IMR-90 (cell line): ENCODE measurements at regions of chr5 and their contacts with region 1.

Region 1: GRCh38 chr5:65910711-65911110 is 15.7 kb upstream of the ERBIN start:
- DNase-seq: no peak
- ATAC-seq: no peak
- H3K4me3 ChIP-seq: no peak overlapping the region
- H3K27ac ChIP-seq: no peak overlapping the region
- H3K4me1 ChIP-seq: no peaks in the 10 kb centered on the region
- H3K27me3 ChIP-seq: no peaks in the 10 kb centered on the region
- CTCF ChIP-seq: no peak
- POLR2A ChIP-seq: no peak
- RAD21 ChIP-seq: no peak

Region 2: GRCh38 chr5:65730910-65731309 is 179.8 kb before region 1 on chr5:
- CTCF ChIA-PET with region 1: interaction called, 10 read pairs
- POLR2A ChIA-PET with region 1: interaction called, 3 read pairs
- dilution Hi-C with region 1: no loop called
- in situ Hi-C with region 1: no loop called
- intact Hi-C with region 1: no loop called
- DNase-seq: peak; percentile 46
- ATAC-seq: peak; percentile 51
- H3K4me3 ChIP-seq: no peak overlapping the region
- H3K27ac ChIP-seq: no peak overlapping the region
- H3K4me1 ChIP-seq: peaks cover 4% of the 10 kb centered on the region
- H3K27me3 ChIP-seq: no peaks in the 10 kb centered on the region
- CTCF ChIP-seq: no peak
- POLR2A ChIP-seq: no peak
- RAD21 ChIP-seq: no peak

Region 3: DNA sequence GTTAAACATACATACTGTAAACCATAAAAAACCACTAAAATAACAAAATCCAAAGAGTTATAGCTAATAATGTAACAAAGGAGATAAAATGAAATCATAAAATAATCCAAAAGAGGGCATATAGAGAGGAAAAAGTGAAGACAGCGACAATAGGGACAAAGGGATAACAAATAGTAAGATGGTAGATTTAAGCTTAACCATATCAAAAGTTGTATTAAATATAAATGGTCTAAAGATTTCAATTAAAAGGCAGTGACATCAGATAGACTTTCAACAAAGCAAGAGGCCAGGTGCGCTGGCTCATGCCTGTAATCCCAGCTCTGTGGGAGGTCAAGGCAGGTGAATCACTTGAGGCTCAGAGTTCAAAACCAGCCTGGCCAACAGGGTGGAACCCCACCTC is 178.7 kb after region 1 on chr5:
- CTCF ChIA-PET with region 1: no interaction called
- POLR2A ChIA-PET with region 1: no interaction called
- dilution Hi-C with region 1: no loop called
- in situ Hi-C with region 1: no loop called
- intact Hi-C with region 1: no loop called
- DNase-seq: no peak
- ATAC-seq: no peak
- H3K4me3 ChIP-seq: no peak overlapping the region
- H3K27ac ChIP-seq: no peak overlapping the region
- H3K4me1 ChIP-seq: no peaks in the 10 kb centered on the region
- H3K27me3 ChIP-seq: no peaks in the 10 kb centered on the region
- CTCF ChIP-seq: no peak
- POLR2A ChIP-seq: no peak
- RAD21 ChIP-seq: no peak